ENCODE measurements at regions of chr3 and their contacts with region 1.

Region 1: GRCh38 chr3:181839039-181839915 is 127.6 kb downstream of the SOX2 start:
- DNase-seq: no peak
- H3K4me3 ChIP-seq: no peak overlapping the region
- CTCF ChIP-seq: no peak

Region 2: GRCh38 chr3:181932039-181932438 is 92.8 kb after region 1 on chr3:
- in situ Hi-C with region 1: loop called (anchors 5 kb)
- DNase-seq: no peak
- H3K4me3 ChIP-seq: no peak overlapping the region
- CTCF ChIP-seq: no peak